T-cell (primary cell): ENCODE measurements at regions of chr14 and their contacts with region 1.

Region 1: GRCh38 chr14:71248204-71248603 is 340.9 kb downstream of the PCNX1 start:
- DNase-seq: no peak
- ATAC-seq: no peak
- H3K4me3 ChIP-seq: no peak overlapping the region
- H3K4me3 Mint-ChIP-seq: no peak overlapping the region
- H3K27ac ChIP-seq: no peak overlapping the region
- H3K27ac Mint-ChIP-seq: peak overlapping the region in 1 of 2 donors; percentile 0
- H3K4me1 ChIP-seq: peaks cover 11 to 20% of the 10 kb centered on the region in 2 experiments
- H3K4me1 Mint-ChIP-seq: peaks cover 34 to 50% (median 38%) of the 10 kb centered on the region in 3 donors
- H3K27me3 ChIP-seq: no peaks in the 10 kb centered on the region
- H3K27me3 Mint-ChIP-seq: no peaks in the 10 kb centered on the region

Region 2: GRCh38 chr14:71193663-71194062 is 54.5 kb before region 1 on chr14:
- CTCF ChIA-PET with region 1: interaction called in 1 of 2 experiments, 10 read pairs
- POLR2A ChIA-PET with region 1: no interaction called
- DNase-seq: no peak
- ATAC-seq: no peak
- H3K4me3 ChIP-seq: no peak overlapping the region
- H3K4me3 Mint-ChIP-seq: no peak overlapping the region
- H3K27ac ChIP-seq: no peak overlapping the region
- H3K27ac Mint-ChIP-seq: no peak overlapping the region
- H3K4me1 ChIP-seq: no peaks in the 10 kb centered on the region
- H3K4me1 Mint-ChIP-seq: no peaks in the 10 kb centered on the region
- H3K27me3 ChIP-seq: peaks cover 0 to 4% of the 10 kb centered on the region in 2 experiments
- H3K27me3 Mint-ChIP-seq: peaks cover 0 to 4% of the 10 kb centered on the region in 2 donors